ENCODE measurements at regions of chr1 and their contacts with region 1.

Region 1: DNA sequence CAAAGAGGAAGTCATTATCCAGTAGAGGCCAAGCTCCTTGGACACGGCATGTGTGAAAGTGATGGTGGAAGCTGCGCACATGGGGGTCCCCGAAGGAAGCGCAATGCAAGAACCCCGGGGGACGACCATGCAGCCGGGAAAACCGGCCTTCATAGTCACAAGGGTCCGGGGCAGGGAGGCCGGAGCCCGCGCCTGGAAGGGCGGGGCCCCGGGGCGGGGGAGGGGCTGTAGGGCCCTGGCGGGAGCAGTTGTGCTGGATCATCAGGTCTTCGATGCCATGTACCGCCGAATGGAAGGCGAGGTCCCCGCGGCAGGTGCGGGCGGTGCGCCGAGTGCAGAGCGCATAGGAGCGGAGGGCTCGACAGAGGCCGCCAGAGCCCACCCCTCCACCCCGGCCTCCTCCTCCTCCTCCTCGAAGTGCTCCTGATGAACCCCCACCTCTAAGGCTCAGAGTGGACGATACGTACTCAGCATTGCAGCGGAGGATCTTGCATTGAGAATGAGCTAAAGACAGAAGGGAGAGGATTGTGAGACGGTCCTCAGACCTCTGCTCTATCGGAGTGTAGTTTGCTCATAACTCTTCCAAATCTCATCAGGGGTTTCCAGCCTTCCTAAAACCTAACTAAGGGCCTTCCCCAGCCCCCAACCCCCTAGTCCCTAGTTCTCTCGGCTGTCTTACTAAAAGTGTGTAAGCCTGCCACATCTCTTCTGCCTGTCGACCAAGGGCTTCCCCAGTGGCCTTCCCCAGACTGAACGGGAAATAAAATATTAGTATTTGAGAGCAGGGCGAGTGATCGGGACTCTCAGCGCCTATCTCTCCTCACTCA is 2.1 kb downstream of the HJV start:
- DNase-seq: no peak
- ATAC-seq: peak; percentile 39
- H3K4me3 Mint-ChIP-seq: peak overlapping the region; percentile 22
- H3K27ac Mint-ChIP-seq: no peak overlapping the region
- H3K4me1 Mint-ChIP-seq: peaks cover 7% of the 10 kb centered on the region
- H3K27me3 Mint-ChIP-seq: peaks cover 37% of the 10 kb centered on the region
- CTCF ChIP-seq: no peak

Region 2: GRCh38 chr1:146036965-146037646 is 17.7 kb after region 1 on chr1:
- CTCF ChIA-PET with region 1: interaction called, 32 read pairs
- POLR2A ChIA-PET with region 1: interaction called, 8 read pairs
- intact Hi-C with region 1: no loop called
- DNase-seq: peak; percentile 92
- ATAC-seq: peak; percentile 35
- H3K4me3 Mint-ChIP-seq: peak overlapping the region; percentile 92
- H3K27ac Mint-ChIP-seq: peak overlapping the region; percentile 98
- H3K4me1 Mint-ChIP-seq: peaks cover 25% of the 10 kb centered on the region
- H3K27me3 Mint-ChIP-seq: peaks cover 7% of the 10 kb centered on the region
- CTCF ChIP-seq: no peak